Activated naive CD4-positive, alpha-beta T cell treated with anti-CD3 and anti-CD28 coated beads for 36 hours (primary cell): ENCODE measurements at regions of chr4 and their contacts with region 1.

Region 1: DNA sequence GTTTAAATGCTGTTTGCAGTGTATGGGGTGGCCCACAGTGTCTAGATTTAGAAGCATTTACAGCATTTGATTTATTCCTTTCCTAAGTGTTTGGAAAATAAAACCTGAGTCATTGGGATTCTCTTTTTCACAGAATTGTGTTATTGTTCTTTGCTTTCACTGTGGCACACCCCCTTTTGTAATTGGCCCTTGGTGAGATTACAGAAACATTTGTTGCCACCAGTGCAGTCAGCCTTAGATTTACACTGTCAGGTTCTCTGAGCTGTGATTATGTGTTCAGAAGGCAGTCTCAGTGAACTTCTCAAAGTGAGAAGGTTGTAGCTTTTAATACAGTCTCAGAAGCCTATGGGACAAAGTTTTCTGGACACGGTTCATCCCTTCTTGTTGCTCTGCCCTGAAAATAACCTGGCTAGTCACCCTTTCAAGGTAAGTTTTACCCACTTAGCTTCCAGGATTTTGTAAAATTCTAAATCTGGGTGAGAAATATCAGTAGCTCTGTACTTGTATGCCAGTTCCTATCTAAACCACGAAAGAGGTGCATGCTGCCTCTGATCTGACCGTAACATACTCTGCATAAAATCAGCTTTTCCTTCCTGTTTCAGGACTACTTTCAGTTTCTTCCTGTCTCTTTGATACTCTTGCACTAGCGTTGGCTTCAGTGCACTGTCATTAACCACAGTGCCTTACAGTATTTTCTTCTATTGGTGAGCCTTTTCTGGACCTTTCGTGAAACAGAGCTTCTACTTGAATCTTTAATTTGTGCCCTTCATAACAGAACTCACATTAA is 12.6 kb downstream of the RUFY3 start:
- DNase-seq: peak; percentile 52
- H3K4me3 Mint-ChIP-seq: peak overlapping the region; percentile 58
- H3K27ac Mint-ChIP-seq: peak overlapping the region; percentile 25
- H3K4me1 Mint-ChIP-seq: peaks cover 37% of the 10 kb centered on the region
- H3K27me3 Mint-ChIP-seq: no peaks in the 10 kb centered on the region

Region 2: GRCh38 chr4:70704331-70705145 is 29.8 kb before region 1 on chr4:
- CTCF ChIA-PET with region 1: interaction called, 12 read pairs
- intact Hi-C with region 1: loop called (anchors 1 kb)
- DNase-seq: peak; percentile 69
- H3K4me3 Mint-ChIP-seq: peak overlapping the region; percentile 81
- H3K27ac Mint-ChIP-seq: peak overlapping the region; percentile 85
- H3K4me1 Mint-ChIP-seq: peaks cover 27% of the 10 kb centered on the region
- H3K27me3 Mint-ChIP-seq: no peaks in the 10 kb centered on the region

Region 3: DNA sequence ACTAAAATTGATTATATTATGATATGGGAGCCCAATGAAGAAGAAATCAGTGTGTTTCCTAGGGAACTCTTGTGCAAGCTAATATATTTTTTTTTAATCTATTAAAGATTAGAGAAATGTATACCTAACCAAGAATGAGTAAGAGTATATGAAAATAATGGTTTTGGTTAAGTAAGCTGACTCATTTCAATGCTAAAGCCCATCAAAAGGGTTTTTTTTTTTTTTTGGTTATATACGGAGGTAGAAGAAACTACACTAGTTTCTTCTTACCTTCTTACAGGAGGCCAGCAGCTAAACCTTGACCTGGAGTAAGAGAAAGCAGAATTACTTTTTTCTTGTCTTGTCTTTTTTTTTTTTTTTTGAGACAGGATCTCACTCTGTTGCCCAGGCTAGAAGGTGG is 15.0 kb after region 1 on chr4:
- CTCF ChIA-PET with region 1: interaction called, 14 read pairs
- intact Hi-C with region 1: loop called (anchors 1 kb)
- DNase-seq: no peak
- H3K4me3 Mint-ChIP-seq: no peak overlapping the region
- H3K27ac Mint-ChIP-seq: no peak overlapping the region
- H3K4me1 Mint-ChIP-seq: peaks cover 16% of the 10 kb centered on the region
- H3K27me3 Mint-ChIP-seq: no peaks in the 10 kb centered on the region

Region 4: GRCh38 chr4:70839589-70840093 is 105.3 kb after region 1 on chr4 and contains the start of gene GRSF1:
- CTCF ChIA-PET with region 1: no interaction called
- intact Hi-C with region 1: loop called (anchors 1 kb)
- DNase-seq: peak; percentile 97
- H3K4me3 Mint-ChIP-seq: peak within 1 kb of the TSS; percentile 98
- H3K27ac Mint-ChIP-seq: peak within 1 kb of the TSS; percentile 97
- H3K4me1 Mint-ChIP-seq: peaks cover 34% of the 10 kb centered on the region
- H3K27me3 Mint-ChIP-seq: no peaks in the 10 kb centered on the region
- total RNA-seq, gene GRSF1: 66.7 to 75.0 TPM

Region 5: GRCh38 chr4:70885174-70885573 is 150.8 kb after region 1 on chr4:
- CTCF ChIA-PET with region 1: no interaction called
- intact Hi-C with region 1: no loop called
- DNase-seq: peak; percentile 10
- H3K4me3 Mint-ChIP-seq: no peak overlapping the region
- H3K27ac Mint-ChIP-seq: no peak overlapping the region
- H3K4me1 Mint-ChIP-seq: no peaks in the 10 kb centered on the region
- H3K27me3 Mint-ChIP-seq: no peaks in the 10 kb centered on the region

Region 6: GRCh38 chr4:70927502-70928137 is 193.3 kb after region 1 on chr4:
- CTCF ChIA-PET with region 1: no interaction called
- intact Hi-C with region 1: loop called (anchors 2 kb)
- DNase-seq: peak; percentile 73
- H3K4me3 Mint-ChIP-seq: peak overlapping the region; percentile 51
- H3K27ac Mint-ChIP-seq: peak overlapping the region; percentile 66
- H3K4me1 Mint-ChIP-seq: peaks cover 28% of the 10 kb centered on the region
- H3K27me3 Mint-ChIP-seq: no peaks in the 10 kb centered on the region